Left cardiac atrium (tissue), 4 donors: ENCODE measurements at regions of chr17 and their contacts with region 1.

Region 1: DNA sequence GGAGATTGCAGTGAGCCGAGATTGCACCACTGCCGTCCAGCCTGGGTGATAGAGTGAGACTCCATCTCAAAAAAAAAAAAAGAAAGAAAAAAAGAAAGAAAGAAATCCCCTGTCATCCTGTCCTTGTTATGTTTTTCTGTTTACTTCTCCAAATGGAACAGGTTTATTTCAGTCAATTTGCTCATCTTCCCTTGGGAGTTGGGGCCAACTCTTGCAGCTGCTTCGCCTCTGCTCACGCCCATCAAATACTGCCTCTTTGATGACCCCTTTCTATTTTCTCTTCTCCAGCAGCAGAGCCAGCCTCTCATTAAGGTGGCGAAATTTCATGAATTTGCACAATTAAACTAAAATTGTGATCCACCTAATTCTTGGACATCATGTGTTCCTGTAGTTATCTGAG is 173.4 kb downstream of the ZNF18 start:
- DNase-seq: no peak
- ATAC-seq: no peak

Region 2: DNA sequence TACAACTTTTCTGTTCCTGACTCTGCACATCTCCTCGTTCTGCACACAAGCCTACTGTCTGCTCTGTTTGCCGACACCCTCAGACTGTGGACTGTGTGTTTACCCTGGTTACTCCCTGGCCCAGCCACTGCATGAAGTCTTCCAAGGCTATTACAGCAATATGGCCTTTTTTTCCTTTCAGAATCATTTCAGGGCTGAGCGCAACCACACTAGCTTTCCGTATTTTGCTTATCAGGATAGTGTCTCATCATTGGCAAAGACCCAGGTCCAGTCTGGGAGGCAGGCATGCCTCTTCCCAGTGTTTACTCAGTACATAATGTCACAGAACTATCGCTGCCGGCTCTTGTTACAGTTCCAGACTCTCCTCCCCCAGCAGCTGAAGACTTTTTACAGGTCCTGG is 215.5 kb before region 1 on chr17:
- intact Hi-C with region 1: no loop called
- DNase-seq: peak; percentile 61
- ATAC-seq: peak; percentile 84 to 95

Region 3: GRCh38 chr17:11880714-11881113 is 56.9 kb after region 1 on chr17:
- intact Hi-C with region 1: loop called in 1 of 2 experiments (anchors 10 kb)
- DNase-seq: no peak
- ATAC-seq: peak in 1 of 2 donors; percentile 71

Region 4: GRCh38 chr17:11935734-11936406 is 112.0 kb after region 1 on chr17:
- intact Hi-C with region 1: no loop called
- DNase-seq: peak; percentile 57
- ATAC-seq: no peak